IMR-90 (cell line): ENCODE measurements at regions of chr11 and their contacts with region 1.

Region 1: GRCh38 chr11:10379022-10379421 is 74.1 kb downstream of the ADM start:
- DNase-seq: peak; percentile 50
- ATAC-seq: peak; percentile 43
- H3K4me3 ChIP-seq: no peak overlapping the region
- H3K27ac ChIP-seq: peak overlapping the region; percentile 48; the same call in 1 of the 2 replicates
- H3K4me1 ChIP-seq: peaks cover 22% of the 10 kb centered on the region
- H3K27me3 ChIP-seq: no peaks in the 10 kb centered on the region
- CTCF ChIP-seq: no peak
- POLR2A ChIP-seq: no peak
- RAD21 ChIP-seq: no peak

Region 2: GRCh38 chr11:9626496-9627394 is 752.3 kb before region 1 on chr11:
- CTCF ChIA-PET with region 1: no interaction called
- POLR2A ChIA-PET with region 1: no interaction called
- dilution Hi-C with region 1: no loop called
- in situ Hi-C with region 1: no loop called
- intact Hi-C with region 1: no loop called
- DNase-seq: no peak
- ATAC-seq: 0 out of 2 replicates have a peak, but pooled peaks have one; percentile 27
- H3K4me3 ChIP-seq: no peak overlapping the region
- H3K27ac ChIP-seq: no peak overlapping the region
- H3K4me1 ChIP-seq: peaks cover 3% of the 10 kb centered on the region; the same call in 1 of the 2 replicates
- H3K27me3 ChIP-seq: no peaks in the 10 kb centered on the region
- CTCF ChIP-seq: no peak
- POLR2A ChIP-seq: no peak
- RAD21 ChIP-seq: no peak

Region 3: DNA sequence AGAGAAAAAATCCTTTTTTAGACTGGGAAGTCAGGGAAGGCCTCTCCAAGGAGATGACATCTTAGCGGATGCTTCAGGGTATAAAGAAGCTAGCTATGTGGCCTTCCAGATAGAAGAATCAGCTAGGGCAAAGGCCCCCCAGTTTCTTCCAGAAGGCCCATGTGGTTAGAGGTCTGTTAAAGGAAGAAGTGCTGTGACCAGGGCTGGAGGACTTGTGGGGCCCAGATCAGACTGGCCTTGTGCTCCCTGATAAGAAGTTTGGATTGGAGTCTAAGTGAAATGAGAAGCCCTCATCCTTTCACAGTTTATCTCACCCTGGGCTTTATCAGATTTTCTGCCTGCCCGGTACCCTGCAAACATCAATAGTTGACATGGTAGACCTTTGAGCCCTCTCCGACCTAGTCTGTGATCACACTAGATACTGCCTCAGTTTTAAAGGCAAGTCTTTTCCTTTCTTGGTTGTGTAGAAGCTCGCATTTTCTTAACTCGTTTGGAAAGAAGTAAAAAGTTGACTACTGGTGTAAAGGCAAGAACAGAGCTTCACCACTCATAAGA is 83.8 kb after region 1 on chr11:
- CTCF ChIA-PET with region 1: no interaction called
- POLR2A ChIA-PET with region 1: no interaction called
- dilution Hi-C with region 1: no loop called
- in situ Hi-C with region 1: no loop called
- intact Hi-C with region 1: no loop called
- DNase-seq: no peak
- ATAC-seq: no peak
- H3K4me3 ChIP-seq: no peak overlapping the region
- H3K27ac ChIP-seq: no peak overlapping the region
- H3K4me1 ChIP-seq: peaks cover 7% of the 10 kb centered on the region; the same call in 1 of the 2 replicates
- H3K27me3 ChIP-seq: no peaks in the 10 kb centered on the region
- CTCF ChIP-seq: no peak
- POLR2A ChIP-seq: no peak
- RAD21 ChIP-seq: no peak

Region 4: DNA sequence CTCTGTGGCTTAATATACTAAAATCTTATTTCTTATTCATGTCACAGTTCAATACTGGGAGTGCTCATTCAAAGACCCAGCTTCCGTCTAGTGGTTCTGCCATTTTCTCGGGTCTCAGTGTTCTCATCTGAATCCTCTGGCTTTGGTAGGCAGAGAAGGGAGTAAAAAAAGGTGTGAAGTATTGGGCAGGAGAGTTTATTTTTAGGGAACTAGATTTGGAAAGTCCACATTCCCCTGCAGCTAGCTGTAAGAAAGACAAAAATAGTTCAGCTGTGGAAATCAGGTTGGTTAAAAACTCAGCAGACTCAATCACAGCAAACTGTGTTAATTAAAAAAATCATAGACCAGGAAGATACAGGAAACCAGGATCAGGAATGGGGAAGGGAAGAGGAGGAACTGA is 193.5 kb after region 1 on chr11:
- CTCF ChIA-PET with region 1: no interaction called
- POLR2A ChIA-PET with region 1: interaction called, 20 read pairs
- dilution Hi-C with region 1: no loop called
- in situ Hi-C with region 1: no loop called
- intact Hi-C with region 1: no loop called
- DNase-seq: no peak
- ATAC-seq: no peak
- H3K4me3 ChIP-seq: no peak overlapping the region
- H3K27ac ChIP-seq: no peak overlapping the region
- H3K4me1 ChIP-seq: peaks cover 9% of the 10 kb centered on the region
- H3K27me3 ChIP-seq: no peaks in the 10 kb centered on the region
- CTCF ChIP-seq: no peak
- POLR2A ChIP-seq: no peak
- RAD21 ChIP-seq: no peak